ENCODE measurements at regions of chr3 and their contacts with region 1.

Region 1: GRCh38 chr3:184362668-184363540 is 1.4 kb downstream of the POLR2H start:
- DNase-seq: peak; percentile 98
- ATAC-seq: peak; percentile 84
- H3K4me3 ChIP-seq: peak overlapping the region; percentile 68 to 94 (median 76)
- H3K4me3 Mint-ChIP-seq: peak overlapping the region; percentile 90
- H3K27ac ChIP-seq: peak overlapping the region; percentile 79 to 86
- H3K27ac Mint-ChIP-seq: peak overlapping the region; percentile 94
- H3K4me1 ChIP-seq: peaks cover 9 to 17% of the 10 kb centered on the region in 2 donors
- H3K4me1 Mint-ChIP-seq: peaks cover 20% of the 10 kb centered on the region
- H3K27me3 ChIP-seq: no peaks in the 10 kb centered on the region
- H3K27me3 Mint-ChIP-seq: no peaks in the 10 kb centered on the region
- CTCF ChIP-seq: peak; percentile 69

Region 2: DNA sequence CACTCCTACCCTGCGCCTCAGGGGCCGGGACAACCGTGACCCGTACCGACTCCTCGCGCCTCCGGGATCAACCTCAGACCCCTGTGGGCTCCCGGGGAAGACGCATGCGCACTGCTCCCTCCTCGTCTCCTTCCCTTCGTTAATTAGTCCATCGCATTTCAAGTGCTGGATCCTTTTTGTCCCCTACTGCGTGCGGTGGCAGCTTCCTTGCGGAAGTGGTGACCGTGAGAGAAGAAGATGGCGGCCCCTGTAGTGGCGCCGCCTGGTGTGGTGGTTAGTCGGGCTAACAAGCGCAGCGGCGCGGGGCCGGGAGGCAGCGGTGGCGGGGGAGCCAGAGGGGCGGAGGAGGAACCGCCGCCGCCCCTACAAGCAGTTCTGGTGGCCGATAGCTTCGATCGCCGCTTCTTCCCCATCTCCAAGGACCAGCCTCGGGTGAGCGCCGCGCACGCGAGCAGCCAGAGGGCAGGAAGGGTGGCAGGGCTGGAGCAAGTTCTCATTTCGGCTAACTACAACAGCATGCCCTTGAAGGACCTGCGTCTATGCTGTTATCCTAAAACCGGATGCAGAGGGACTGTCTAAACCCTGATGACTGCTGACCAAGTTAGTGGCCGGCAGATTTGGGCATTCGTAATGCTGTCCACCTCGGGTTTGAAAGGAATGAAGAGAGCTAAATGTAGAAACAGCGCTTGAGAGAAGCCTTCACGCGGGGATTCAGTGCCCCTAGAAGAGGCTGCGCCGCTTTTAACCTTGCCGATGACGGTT is 227.6 kb before region 1 on chr3 and contains the start of gene EIF2B5:
- CTCF ChIA-PET with region 1: no interaction called
- POLR2A ChIA-PET with region 1: no interaction called
- intact Hi-C with region 1: loop called (anchors 1 kb)
- DNase-seq: peak; percentile 94
- ATAC-seq: peak; percentile 87
- H3K4me3 ChIP-seq: peak within 1 kb of the TSS; percentile 92 to 99 (median 95)
- H3K4me3 Mint-ChIP-seq: peak within 1 kb of the TSS; percentile 94
- H3K27ac ChIP-seq: peak within 1 kb of the TSS; percentile 78 to 86
- H3K27ac Mint-ChIP-seq: peak within 1 kb of the TSS; percentile 95
- H3K4me1 ChIP-seq: peaks cover 15 to 19% of the 10 kb centered on the region in 2 donors
- H3K4me1 Mint-ChIP-seq: peaks cover 37% of the 10 kb centered on the region
- H3K27me3 ChIP-seq: no peaks in the 10 kb centered on the region
- H3K27me3 Mint-ChIP-seq: no peaks in the 10 kb centered on the region
- CTCF ChIP-seq: peak; percentile 29
- total RNA-seq, gene EIF2B5: 83.8 and 85.9 TPM in 2 replicates

Region 3: DNA sequence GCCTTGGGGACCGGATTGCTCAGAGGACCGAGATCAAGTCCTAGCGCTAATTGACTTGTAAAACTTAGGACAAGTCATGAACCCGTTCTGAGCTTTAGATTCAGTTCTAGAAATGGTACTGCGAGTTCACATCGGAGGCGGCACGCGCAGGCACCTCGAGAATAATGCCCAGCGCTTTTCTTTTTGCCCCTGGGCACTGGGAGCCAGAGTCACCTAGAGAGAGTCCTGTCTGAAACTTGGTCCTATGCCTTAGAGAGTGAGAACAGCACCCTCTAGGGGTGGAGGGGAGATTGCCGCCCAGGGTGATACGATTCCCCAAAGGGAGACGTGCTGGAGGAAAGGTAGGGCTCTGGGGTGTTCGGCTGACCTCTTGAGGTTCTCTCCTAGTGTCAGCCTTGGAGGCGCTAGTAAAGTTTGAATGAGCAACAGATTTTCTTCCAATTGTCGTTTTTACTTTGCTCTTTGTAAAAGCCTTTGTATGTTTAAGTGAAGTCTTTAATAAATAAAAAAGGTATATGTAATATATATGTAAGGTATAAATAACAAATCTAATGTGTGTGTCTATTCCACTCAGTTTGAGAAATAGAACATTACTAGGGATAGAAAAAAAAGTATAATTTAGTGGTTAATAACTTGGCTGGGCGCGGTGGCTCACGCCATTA is 112.6 kb before region 1 on chr3:
- CTCF ChIA-PET with region 1: no interaction called
- POLR2A ChIA-PET with region 1: no interaction called
- intact Hi-C with region 1: loop called (anchors 1 kb)
- DNase-seq: peak; percentile 92
- ATAC-seq: peak; percentile 65
- H3K4me3 ChIP-seq: peak overlapping the region; percentile 88 to 93 (median 91)
- H3K4me3 Mint-ChIP-seq: peak overlapping the region; percentile 87
- H3K27ac ChIP-seq: peak overlapping the region in 1 of 2 donors; percentile 58
- H3K27ac Mint-ChIP-seq: peak overlapping the region; percentile 78
- H3K4me1 ChIP-seq: peaks cover 5 to 17% of the 10 kb centered on the region in 2 donors
- H3K4me1 Mint-ChIP-seq: peaks cover 9% of the 10 kb centered on the region
- H3K27me3 ChIP-seq: no peaks in the 10 kb centered on the region
- H3K27me3 Mint-ChIP-seq: no peaks in the 10 kb centered on the region
- CTCF ChIP-seq: peak; percentile 94

Region 4: GRCh38 chr3:184335661-184336546 is 27.0 kb before region 1 on chr3:
- CTCF ChIA-PET with region 1: no interaction called
- POLR2A ChIA-PET with region 1: interaction called, 5 read pairs
- intact Hi-C with region 1: loop called (anchors 1 kb)
- DNase-seq: peak; percentile 92
- ATAC-seq: peak; percentile 80
- H3K4me3 ChIP-seq: peak overlapping the region; percentile 51 to 83 (median 73)
- H3K4me3 Mint-ChIP-seq: peak overlapping the region; percentile 94
- H3K27ac ChIP-seq: peak overlapping the region; percentile 93
- H3K27ac Mint-ChIP-seq: peak overlapping the region; percentile 90
- H3K4me1 ChIP-seq: peaks cover 14 to 25% of the 10 kb centered on the region in 2 donors
- H3K4me1 Mint-ChIP-seq: peaks cover 30% of the 10 kb centered on the region
- H3K27me3 ChIP-seq: peaks cover 0 to 3% (median 0%) of the 10 kb centered on the region in 4 experiments
- H3K27me3 Mint-ChIP-seq: no peaks in the 10 kb centered on the region
- CTCF ChIP-seq: no peak

Region 5: GRCh38 chr3:184505076-184505878 is 142.4 kb after region 1 on chr3:
- CTCF ChIA-PET with region 1: no interaction called
- POLR2A ChIA-PET with region 1: no interaction called
- intact Hi-C with region 1: no loop called
- DNase-seq: no peak
- ATAC-seq: no peak
- H3K4me3 ChIP-seq: no peak overlapping the region
- H3K4me3 Mint-ChIP-seq: no peak overlapping the region
- H3K27ac ChIP-seq: no peak overlapping the region
- H3K27ac Mint-ChIP-seq: no peak overlapping the region
- H3K4me1 ChIP-seq: no peaks in the 10 kb centered on the region
- H3K4me1 Mint-ChIP-seq: no peaks in the 10 kb centered on the region
- H3K27me3 ChIP-seq: peaks cover 0 to 9% (median 0%) of the 10 kb centered on the region in 4 experiments
- H3K27me3 Mint-ChIP-seq: peaks cover 45% of the 10 kb centered on the region
- CTCF ChIP-seq: no peak

Region 6: GRCh38 chr3:184711493-184712247 is 348.8 kb after region 1 on chr3 and contains the start of gene MAGEF1:
- CTCF ChIA-PET with region 1: no interaction called
- POLR2A ChIA-PET with region 1: no interaction called
- intact Hi-C with region 1: loop called (anchors 5 kb)
- DNase-seq: peak; percentile 73
- ATAC-seq: peak; percentile 81
- H3K4me3 ChIP-seq: peak within 1 kb of the TSS; percentile 72 to 87 (median 77)
- H3K4me3 Mint-ChIP-seq: peak within 1 kb of the TSS; percentile 92
- H3K27ac ChIP-seq: peak within 1 kb of the TSS; percentile 73 to 78
- H3K27ac Mint-ChIP-seq: peak within 1 kb of the TSS; percentile 92
- H3K4me1 ChIP-seq: peaks cover 14 to 29% of the 10 kb centered on the region in 2 donors
- H3K4me1 Mint-ChIP-seq: peaks cover 30% of the 10 kb centered on the region
- H3K27me3 ChIP-seq: no peaks in the 10 kb centered on the region
- H3K27me3 Mint-ChIP-seq: no peaks in the 10 kb centered on the region
- CTCF ChIP-seq: no peak
- total RNA-seq, gene MAGEF1: 26.2 and 27.1 TPM in 2 replicates